ENCODE measurements at regions of chr22 and their contacts with region 1.

Region 1: GRCh38 chr22:31055635-31056159 is 25.4 kb upstream of the SMTN start:
- DNase-seq: peak; percentile 98
- H3K4me3 ChIP-seq: no peak overlapping the region
- H3K27ac ChIP-seq: peak overlapping the region; percentile 86
- H3K27me3 ChIP-seq: no peaks in the 10 kb centered on the region
- CTCF ChIP-seq: no peak

Region 2: GRCh38 chr22:30506507-30506968 is 549.2 kb before region 1 on chr22:
- CTCF ChIA-PET with region 1: no interaction called
- POLR2A ChIA-PET with region 1: no interaction called
- DNase-seq: no peak
- H3K4me3 ChIP-seq: no peak overlapping the region
- H3K27ac ChIP-seq: no peak overlapping the region
- H3K27me3 ChIP-seq: peaks cover 29% of the 10 kb centered on the region
- CTCF ChIP-seq: no peak

Region 3: GRCh38 chr22:30968924-30969539 is 86.7 kb before region 1 on chr22 and contains the start of gene TUG1:
- CTCF ChIA-PET with region 1: no interaction called
- POLR2A ChIA-PET with region 1: interaction called, 12 read pairs
- DNase-seq: peak; percentile 95
- H3K4me3 ChIP-seq: peak within 1 kb of the TSS; percentile 73
- H3K27ac ChIP-seq: peak within 1 kb of the TSS; percentile 93
- H3K27me3 ChIP-seq: no peaks in the 10 kb centered on the region
- CTCF ChIP-seq: no peak
- polyA plus RNA-seq, gene TUG1: 129 and 152 TPM in 2 replicates

Region 4: DNA sequence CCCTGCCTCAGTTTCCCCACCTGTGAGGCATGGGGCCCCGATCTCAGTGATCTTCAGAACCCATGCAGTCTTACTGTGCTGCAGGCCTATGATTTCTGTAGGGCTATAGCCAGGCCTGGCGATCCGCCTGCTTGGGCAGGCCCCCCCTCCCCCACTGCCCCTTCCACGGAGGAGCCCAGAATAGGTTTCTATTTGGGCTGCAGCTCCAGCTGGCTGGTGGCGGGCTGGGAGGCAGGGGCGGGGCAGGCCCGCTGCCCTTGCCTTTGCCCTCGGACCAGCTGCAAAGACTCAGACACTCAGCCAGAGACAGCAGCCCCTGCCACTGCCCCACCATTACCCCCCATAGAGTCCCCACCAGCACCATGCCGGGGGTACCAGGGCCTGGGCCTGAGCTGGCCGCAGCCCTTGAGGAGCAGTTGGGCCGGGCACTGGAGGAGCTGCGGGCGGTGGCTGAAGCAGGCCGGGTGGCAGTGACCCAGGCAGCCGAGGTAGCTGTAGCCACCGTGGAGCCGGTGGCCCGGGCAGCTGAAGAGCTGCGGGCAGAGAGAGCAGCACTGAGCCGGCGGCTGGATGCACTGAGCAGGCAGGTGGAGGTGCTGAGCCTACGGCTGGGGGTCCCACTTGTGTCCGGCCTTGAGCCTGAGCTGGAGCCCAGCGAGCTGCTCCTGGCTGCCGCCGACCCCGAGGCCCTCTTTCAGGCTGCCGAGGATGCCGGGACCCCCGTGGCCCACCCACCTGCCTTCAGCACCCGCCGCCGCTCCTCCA is 37.6 kb after region 1 on chr22:
- CTCF ChIA-PET with region 1: no interaction called
- POLR2A ChIA-PET with region 1: no interaction called
- DNase-seq: no peak
- H3K4me3 ChIP-seq: no peak overlapping the region
- H3K27ac ChIP-seq: no peak overlapping the region
- H3K27me3 ChIP-seq: no peaks in the 10 kb centered on the region
- CTCF ChIP-seq: no peak

Measured in AG04450 (cell line).